CD4-positive, alpha-beta T cell (primary cell): ENCODE measurements at regions of chr5 and their contacts with region 1.

Region 1: GRCh38 chr5:151447174-151448037 is at the start of gene SLC36A1:
- DNase-seq: peak; percentile 82 to 95 (median 88)
- ATAC-seq: peak; percentile 97
- H3K4me3 ChIP-seq: peak within 1 kb of the TSS; percentile 93
- H3K4me3 Mint-ChIP-seq: peak within 1 kb of the TSS; percentile 98
- H3K27ac ChIP-seq: peak within 1 kb of the TSS in 1 of 2 donors; percentile 47
- H3K27ac Mint-ChIP-seq: peak within 1 kb of the TSS; percentile 68
- H3K4me1 ChIP-seq: peaks cover 18% of the 10 kb centered on the region
- H3K4me1 Mint-ChIP-seq: peaks cover 23% of the 10 kb centered on the region
- H3K27me3 ChIP-seq: peaks cover 0 to 9% of the 10 kb centered on the region in 2 experiments
- H3K27me3 Mint-ChIP-seq: peaks cover 33% of the 10 kb centered on the region
- CTCF ChIP-seq: peak; percentile 90
- total RNA-seq, gene SLC36A1: 2.2 to 2.8 TPM

Region 2: DNA sequence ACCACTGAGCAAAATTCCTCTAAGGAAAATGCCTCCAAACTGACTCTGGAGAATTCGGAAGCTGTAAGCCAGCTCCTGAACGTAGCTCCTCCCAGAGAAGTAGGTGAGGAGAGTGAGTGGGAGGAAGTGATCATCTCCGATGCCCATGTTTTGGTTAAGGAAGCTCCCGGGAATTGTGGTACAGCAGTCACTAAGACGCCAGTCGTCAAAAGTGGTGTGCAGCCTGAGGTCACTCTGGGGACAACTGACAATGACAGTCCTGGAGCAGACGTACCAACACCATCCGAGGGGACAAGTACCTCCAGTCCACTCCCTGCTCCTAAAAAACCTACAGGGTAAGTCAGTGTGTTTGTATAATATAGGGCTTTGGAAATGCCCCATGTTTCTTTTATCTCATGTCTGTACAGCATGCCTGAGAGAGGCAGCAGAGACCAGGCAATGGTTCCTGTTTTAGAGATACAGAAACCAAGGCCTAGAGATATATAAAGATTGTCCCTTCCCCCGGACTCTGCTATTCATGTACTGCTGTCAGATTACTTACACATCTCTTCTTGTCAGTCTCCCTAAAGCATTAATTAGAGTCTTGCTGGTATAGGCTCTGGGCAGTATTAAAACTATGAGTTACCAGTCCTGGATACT is 1422.9 kb before region 1 on chr5:
- CTCF ChIA-PET with region 1: no interaction called
- POLR2A ChIA-PET with region 1: no interaction called
- intact Hi-C with region 1: no loop called
- DNase-seq: no peak
- ATAC-seq: no peak
- H3K4me3 ChIP-seq: no peak overlapping the region
- H3K4me3 Mint-ChIP-seq: no peak overlapping the region
- H3K27ac ChIP-seq: no peak overlapping the region
- H3K27ac Mint-ChIP-seq: no peak overlapping the region
- H3K4me1 ChIP-seq: no peaks in the 10 kb centered on the region
- H3K4me1 Mint-ChIP-seq: no peaks in the 10 kb centered on the region
- H3K27me3 ChIP-seq: no peaks in the 10 kb centered on the region
- H3K27me3 Mint-ChIP-seq: no peaks in the 10 kb centered on the region
- CTCF ChIP-seq: no peak

Region 3: DNA sequence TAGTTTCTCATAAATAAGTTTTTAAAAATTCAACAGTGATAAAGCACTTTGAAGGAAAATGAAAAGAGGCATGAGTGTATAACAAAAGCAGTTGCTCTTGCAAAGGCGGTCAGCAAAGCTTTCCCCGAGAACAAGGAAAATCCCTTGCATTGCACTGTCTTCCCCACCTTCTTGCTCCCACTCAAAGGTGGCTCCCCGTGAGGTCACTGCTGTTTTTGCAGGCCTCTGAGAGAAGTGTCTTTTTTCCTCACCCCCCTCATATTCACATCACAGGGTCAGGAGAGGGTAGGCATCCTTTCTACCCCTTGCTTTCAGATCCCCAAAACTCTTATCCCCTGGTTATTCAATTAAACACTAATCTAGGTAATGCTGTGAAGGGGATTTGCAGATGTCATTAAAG is 15.2 kb before region 1 on chr5:
- CTCF ChIA-PET with region 1: interaction called, 10 read pairs
- POLR2A ChIA-PET with region 1: no interaction called
- intact Hi-C with region 1: no loop called
- DNase-seq: no peak
- ATAC-seq: no peak
- H3K4me3 ChIP-seq: no peak overlapping the region
- H3K4me3 Mint-ChIP-seq: no peak overlapping the region
- H3K27ac ChIP-seq: no peak overlapping the region
- H3K27ac Mint-ChIP-seq: no peak overlapping the region
- H3K4me1 ChIP-seq: no peaks in the 10 kb centered on the region
- H3K4me1 Mint-ChIP-seq: no peaks in the 10 kb centered on the region
- H3K27me3 ChIP-seq: peaks cover 0 to 5% of the 10 kb centered on the region in 2 experiments
- H3K27me3 Mint-ChIP-seq: peaks cover 23% of the 10 kb centered on the region
- CTCF ChIP-seq: no peak

Region 4: GRCh38 chr5:151499501-151500035 is 52.2 kb after region 1 on chr5:
- CTCF ChIA-PET with region 1: interaction called, 9 read pairs
- POLR2A ChIA-PET with region 1: no interaction called
- intact Hi-C with region 1: loop called (anchors 1 kb)
- DNase-seq: no peak
- ATAC-seq: no peak
- H3K4me3 ChIP-seq: no peak overlapping the region
- H3K4me3 Mint-ChIP-seq: no peak overlapping the region
- H3K27ac ChIP-seq: no peak overlapping the region
- H3K27ac Mint-ChIP-seq: no peak overlapping the region
- H3K4me1 ChIP-seq: peaks cover 6% of the 10 kb centered on the region
- H3K4me1 Mint-ChIP-seq: peaks cover 6% of the 10 kb centered on the region
- H3K27me3 ChIP-seq: no peaks in the 10 kb centered on the region
- H3K27me3 Mint-ChIP-seq: no peaks in the 10 kb centered on the region
- CTCF ChIP-seq: no peak

Region 5: DNA sequence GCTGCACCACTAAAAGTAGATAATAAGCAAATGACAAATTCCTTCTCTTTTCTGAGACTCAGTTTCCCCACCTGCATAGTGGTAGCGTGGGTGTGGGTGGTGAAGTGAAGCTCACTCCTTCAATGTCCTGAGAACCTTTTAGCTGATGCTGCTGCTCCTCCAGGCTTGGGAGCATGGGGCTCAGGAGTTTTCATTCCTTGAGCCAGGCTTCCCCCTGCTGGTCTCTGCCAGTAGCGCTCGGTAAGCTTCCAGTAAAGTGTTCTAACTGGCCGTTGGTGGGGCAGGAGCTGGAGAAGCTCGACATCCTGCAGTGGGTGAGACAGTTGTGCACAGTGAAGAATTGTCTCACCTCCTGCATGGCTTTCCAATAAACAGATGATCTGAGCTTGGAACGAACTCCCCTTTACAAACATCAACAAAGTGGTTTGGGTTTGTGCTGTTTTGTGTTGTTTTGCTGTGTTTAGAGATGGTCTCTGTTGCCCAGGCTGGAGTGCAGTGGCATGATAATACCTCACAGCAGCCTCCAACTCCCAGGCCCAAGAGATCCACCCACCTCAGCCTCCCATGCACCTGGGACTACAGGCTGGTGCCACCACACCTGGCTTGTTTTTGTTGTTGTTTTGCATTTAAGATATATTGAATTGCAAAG is 204.7 kb after region 1 on chr5:
- CTCF ChIA-PET with region 1: interaction called, 35 read pairs
- POLR2A ChIA-PET with region 1: interaction called, 24 read pairs
- intact Hi-C with region 1: loop called (anchors 1 kb)
- DNase-seq: peak; percentile 27 to 85 (median 64)
- ATAC-seq: peak; percentile 91
- H3K4me3 ChIP-seq: no peak overlapping the region
- H3K4me3 Mint-ChIP-seq: no peak overlapping the region
- H3K27ac ChIP-seq: no peak overlapping the region
- H3K27ac Mint-ChIP-seq: no peak overlapping the region
- H3K4me1 ChIP-seq: peaks cover 5% of the 10 kb centered on the region
- H3K4me1 Mint-ChIP-seq: no peaks in the 10 kb centered on the region
- H3K27me3 ChIP-seq: peaks cover 0 to 2% of the 10 kb centered on the region in 2 experiments
- H3K27me3 Mint-ChIP-seq: peaks cover 5% of the 10 kb centered on the region
- CTCF ChIP-seq: peak; percentile 87

Region 6: GRCh38 chr5:151764801-151765200 is 317.4 kb after region 1 on chr5:
- CTCF ChIA-PET with region 1: no interaction called
- POLR2A ChIA-PET with region 1: no interaction called
- intact Hi-C with region 1: loop called in 1 of 2 experiments (anchors 5 kb)
- DNase-seq: no peak
- ATAC-seq: no peak
- H3K4me3 ChIP-seq: no peak overlapping the region
- H3K4me3 Mint-ChIP-seq: no peak overlapping the region
- H3K27ac ChIP-seq: no peak overlapping the region
- H3K27ac Mint-ChIP-seq: no peak overlapping the region
- H3K4me1 ChIP-seq: peaks cover 7% of the 10 kb centered on the region
- H3K4me1 Mint-ChIP-seq: peaks cover 6% of the 10 kb centered on the region
- H3K27me3 ChIP-seq: no peaks in the 10 kb centered on the region
- H3K27me3 Mint-ChIP-seq: no peaks in the 10 kb centered on the region
- CTCF ChIP-seq: no peak